Aorta (tissue), 5 donors: ENCODE measurements at regions of chr20 and their contacts with region 1.

Region 1: GRCh38 chr20:58650776-58651558 is at the start of gene STX16:
- DNase-seq: peak; percentile 95 to 96
- ATAC-seq: peak; percentile 96
- H3K4me3 ChIP-seq: peak within 1 kb of the TSS; percentile 78 to 81
- H3K27ac ChIP-seq: peak within 1 kb of the TSS; percentile 70 to 89
- H3K4me1 ChIP-seq: peaks cover 4 to 7% of the 10 kb centered on the region in 2 donors
- H3K27me3 ChIP-seq: no peaks in the 10 kb centered on the region
- total RNA-seq, gene STX16: 48.7 to 75.7 TPM

Region 2: GRCh38 chr20:57205360-57206245 is 1445.4 kb before region 1 on chr20:
- intact Hi-C with region 1: no loop called
- DNase-seq: no peak
- ATAC-seq: no peak
- H3K4me3 ChIP-seq: no peak overlapping the region
- H3K27ac ChIP-seq: no peak overlapping the region
- H3K4me1 ChIP-seq: no peaks in the 10 kb centered on the region
- H3K27me3 ChIP-seq: no peaks in the 10 kb centered on the region

Region 3: DNA sequence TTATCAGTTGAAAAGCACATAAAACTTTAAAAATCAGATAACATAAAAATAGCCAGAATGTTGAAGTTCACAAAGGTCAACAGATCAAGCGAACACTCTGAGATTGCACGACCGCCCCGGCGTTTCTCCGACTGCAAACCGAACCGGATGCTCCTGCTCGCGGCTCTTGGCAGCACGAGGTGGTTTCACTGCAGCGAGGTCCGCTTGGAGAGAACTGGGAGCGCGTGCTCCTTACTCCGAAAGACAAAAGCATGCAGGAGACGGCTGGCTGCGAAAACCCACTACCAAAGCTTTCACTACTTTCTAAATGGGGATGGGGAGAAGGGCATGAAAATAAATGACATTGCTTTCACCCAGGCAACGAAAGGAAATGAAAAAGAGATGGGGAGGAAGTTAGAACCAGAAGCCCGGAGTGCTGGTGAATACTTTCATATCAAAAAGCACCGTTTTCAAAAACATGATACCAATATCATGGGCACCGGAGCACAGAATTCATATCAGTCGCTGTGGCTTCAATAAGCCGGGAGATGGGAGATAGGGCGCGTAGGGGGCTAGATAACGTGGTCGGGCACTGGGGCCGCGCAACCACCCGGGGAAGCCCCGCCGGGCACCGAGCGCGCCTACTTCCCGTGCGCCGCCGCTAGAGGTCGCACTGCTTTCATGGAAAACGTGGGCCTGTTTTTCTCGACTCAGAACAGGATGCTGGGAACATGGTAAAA is 414.2 kb before region 1 on chr20:
- intact Hi-C with region 1: loop called in 1 of 2 experiments (anchors 5 kb)
- DNase-seq: peak; percentile 82 to 93
- ATAC-seq: peak; percentile 94
- H3K4me3 ChIP-seq: peak overlapping the region; percentile 64 to 68
- H3K27ac ChIP-seq: no peak overlapping the region
- H3K4me1 ChIP-seq: no peaks in the 10 kb centered on the region
- H3K27me3 ChIP-seq: no peaks in the 10 kb centered on the region

Region 4: GRCh38 chr20:58388882-58389323 is 262.1 kb before region 1 on chr20 and contains the start of gene VAPB:
- intact Hi-C with region 1: loop called in 1 of 2 experiments (anchors 10 kb)
- DNase-seq: peak; percentile 96 to 99
- ATAC-seq: peak; percentile 100
- H3K4me3 ChIP-seq: peak within 1 kb of the TSS; percentile 78 to 88
- H3K27ac ChIP-seq: peak within 1 kb of the TSS; percentile 6 to 82
- H3K4me1 ChIP-seq: peaks cover 0 to under 1% of the 10 kb centered on the region in 2 donors
- H3K27me3 ChIP-seq: no peaks in the 10 kb centered on the region
- total RNA-seq, gene VAPB: 47.6 to 50.6 TPM

Region 5: DNA sequence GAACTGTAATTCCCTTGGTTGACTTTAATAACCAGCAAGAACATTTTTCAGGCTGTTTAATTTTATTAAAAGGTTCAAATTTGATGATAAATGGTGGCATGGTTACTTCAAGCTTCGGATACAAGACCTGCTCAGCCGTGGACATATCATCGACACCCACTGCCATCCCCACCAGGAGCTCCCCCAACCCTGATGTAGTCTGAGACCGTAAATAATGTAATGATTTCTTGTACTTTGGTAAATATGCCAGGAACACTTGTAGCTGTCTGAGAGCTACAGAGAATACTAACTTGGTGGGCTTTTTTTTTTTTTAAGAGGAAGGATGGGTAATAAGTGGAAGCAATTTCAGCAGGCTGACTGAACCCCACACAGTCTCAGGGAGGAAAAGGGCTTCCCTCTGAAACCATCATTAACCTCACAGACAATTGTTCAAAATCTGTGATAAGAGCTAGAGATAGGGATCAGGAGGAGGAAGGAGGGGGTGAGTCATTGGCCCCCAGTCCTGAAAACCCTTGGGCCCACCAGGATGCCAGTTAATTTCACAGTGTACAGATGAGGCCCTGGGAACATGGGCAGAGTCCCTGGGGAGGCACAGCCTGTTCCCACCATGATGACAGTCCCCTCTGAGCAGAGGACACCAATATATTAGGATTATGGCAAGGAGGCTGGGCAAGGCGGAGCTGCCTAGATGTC is 191.8 kb before region 1 on chr20:
- intact Hi-C with region 1: no loop called
- DNase-seq: no peak
- ATAC-seq: no peak
- H3K4me3 ChIP-seq: no peak overlapping the region
- H3K27ac ChIP-seq: no peak overlapping the region
- H3K4me1 ChIP-seq: no peaks in the 10 kb centered on the region
- H3K27me3 ChIP-seq: no peaks in the 10 kb centered on the region

Region 6: DNA sequence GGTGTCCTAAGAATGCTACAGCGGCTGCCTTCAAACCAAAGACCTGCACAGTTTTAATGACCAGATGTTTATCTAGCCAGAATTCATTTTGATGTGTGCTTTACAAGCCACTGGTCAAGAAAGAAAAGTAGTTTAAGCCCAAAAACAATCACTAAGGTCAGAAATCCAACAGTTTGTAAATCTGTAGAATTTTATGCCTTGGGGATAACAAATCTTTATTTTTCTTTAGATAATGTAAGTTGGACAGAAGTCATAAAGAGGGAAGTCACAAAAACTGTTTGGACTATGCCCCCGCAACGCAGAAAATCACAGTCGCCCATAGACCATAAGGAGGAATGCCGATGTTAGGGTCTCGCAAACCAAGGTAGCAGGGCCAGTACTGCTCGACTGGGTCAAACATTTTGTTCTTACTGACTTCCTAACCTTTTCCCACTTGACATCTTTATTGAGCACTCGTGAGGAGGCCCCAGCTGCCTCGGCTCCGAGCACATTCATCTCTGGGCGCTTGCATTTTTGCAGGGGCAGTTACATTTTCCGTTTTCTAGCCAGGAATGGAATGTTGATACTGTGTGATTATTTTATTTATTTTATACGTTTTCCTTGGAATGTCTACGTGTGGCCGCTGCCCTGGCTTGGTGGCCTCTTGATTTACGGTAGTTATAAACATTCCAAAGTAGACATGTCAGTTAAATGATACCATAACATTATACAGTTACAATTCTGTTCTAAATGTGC is 79.1 kb before region 1 on chr20:
- intact Hi-C with region 1: loop called in 1 of 2 experiments (anchors 2 kb)
- DNase-seq: peak in 1 of 2 donors; percentile 63
- ATAC-seq: no peak
- H3K4me3 ChIP-seq: no peak overlapping the region
- H3K27ac ChIP-seq: peak overlapping the region; percentile 40 to 72
- H3K4me1 ChIP-seq: no peaks in the 10 kb centered on the region
- H3K27me3 ChIP-seq: no peaks in the 10 kb centered on the region

Region 7: DNA sequence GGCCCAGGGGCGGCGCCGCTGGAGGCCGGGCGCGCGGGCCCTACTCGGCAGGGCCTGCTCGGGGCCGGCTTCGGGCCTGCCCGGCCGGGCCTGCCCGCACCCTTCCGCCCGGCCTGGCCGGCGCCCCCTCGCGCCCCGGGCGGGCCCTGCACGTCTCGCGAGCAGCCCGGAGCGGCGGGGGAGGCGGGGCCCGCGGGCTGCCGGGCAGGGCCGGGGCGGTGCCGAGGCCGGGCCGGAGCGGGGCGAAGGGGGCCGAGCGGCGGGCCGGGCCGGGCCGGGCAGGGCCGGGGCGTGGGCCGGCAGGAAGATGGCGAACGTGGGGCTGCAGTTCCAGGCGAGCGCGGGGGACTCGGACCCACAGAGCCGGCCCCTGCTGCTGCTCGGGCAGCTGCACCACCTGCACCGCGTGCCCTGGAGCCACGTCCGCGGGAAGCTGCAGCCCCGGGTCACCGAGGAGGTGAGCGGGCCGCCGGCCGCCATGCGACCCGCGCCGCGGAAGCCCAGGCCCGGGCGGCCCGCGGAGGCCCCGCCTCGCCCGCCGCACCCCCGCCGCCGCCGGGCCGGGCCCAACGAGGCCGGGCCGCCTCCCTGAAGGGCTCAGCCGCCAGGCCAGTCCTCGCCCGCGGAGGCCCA is 41.7 kb after region 1 on chr20 and contains the start of gene NPEPL1:
- intact Hi-C with region 1: loop called (anchors 5 kb)
- DNase-seq: peak; percentile 81 to 90
- ATAC-seq: peak; percentile 83
- H3K4me3 ChIP-seq: peak within 1 kb of the TSS; percentile 32 to 35
- H3K27ac ChIP-seq: peak within 1 kb of the TSS; percentile 30 to 32
- H3K4me1 ChIP-seq: no peaks in the 10 kb centered on the region
- H3K27me3 ChIP-seq: no peaks in the 10 kb centered on the region
- total RNA-seq, gene NPEPL1: 22.1 to 53.1 TPM

Region 8: DNA sequence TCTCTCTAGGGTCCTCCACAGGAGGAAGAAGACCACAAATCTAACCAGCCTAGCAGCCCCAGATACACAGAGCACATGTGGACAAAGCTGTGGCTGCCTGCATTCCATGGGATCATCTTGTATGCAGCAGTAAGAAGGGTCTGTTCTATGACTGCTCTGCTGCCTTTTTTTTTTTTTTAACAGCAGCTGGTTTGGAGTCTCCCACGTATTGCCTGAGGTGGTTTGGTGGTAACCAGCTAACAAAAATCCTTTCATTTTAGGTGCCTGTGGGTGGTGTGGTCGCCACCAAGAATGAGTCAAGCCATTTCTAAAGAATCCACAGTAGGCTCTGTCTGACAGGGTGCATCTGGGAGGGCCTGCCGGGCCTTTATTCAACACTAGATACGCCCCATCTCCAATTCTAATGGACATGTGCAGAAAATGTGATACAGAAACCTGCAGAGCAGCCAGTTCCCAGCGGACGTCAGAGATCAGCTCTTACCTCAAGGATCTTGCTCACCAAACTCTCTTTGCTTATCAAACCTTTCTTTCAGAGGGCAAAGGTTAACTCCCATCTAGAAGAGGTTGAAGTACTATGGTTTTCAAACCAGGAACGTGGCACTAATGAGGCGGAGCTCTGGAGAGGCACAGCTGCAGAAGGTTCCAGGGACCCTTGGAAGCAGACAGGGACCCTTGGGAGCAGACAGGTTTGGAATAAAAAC is 167.8 kb after region 1 on chr20:
- intact Hi-C with region 1: no loop called
- DNase-seq: peak in 1 of 2 donors; percentile 4
- ATAC-seq: no peak
- H3K4me3 ChIP-seq: no peak overlapping the region
- H3K27ac ChIP-seq: no peak overlapping the region
- H3K4me1 ChIP-seq: no peaks in the 10 kb centered on the region
- H3K27me3 ChIP-seq: no peaks in the 10 kb centered on the region

Region 9: DNA sequence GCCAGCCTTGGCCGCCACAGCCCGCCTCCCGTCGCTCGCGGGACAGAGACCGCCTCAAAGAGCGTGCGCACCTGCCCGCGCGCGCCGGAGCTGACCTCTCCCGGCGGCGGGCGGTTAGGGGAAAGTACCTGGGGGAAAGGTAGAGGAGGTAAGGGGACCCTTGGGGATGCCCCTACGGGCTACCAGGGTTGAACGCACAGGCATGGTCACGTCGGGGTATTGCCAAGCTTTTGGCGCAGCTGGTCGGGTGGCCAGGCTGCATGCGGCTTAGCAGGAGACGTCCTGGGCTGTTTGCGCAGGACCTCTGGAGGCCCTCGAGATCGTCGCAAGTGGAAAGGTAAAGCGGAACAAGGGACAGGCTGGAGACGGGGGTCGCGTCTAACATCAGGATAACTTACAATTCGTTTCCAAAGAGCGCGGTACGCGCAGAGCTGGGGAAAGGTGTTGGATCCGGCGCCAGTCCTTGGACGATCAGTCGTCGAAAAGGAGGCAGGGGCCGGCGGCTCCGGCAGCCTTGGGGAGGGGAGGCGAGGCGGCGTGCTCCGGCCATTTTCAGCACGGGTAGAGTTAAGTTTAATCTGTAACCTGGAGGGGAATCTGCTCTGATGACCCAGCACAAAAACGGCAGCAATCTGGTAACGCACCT is 190.7 kb after region 1 on chr20:
- intact Hi-C with region 1: no loop called
- DNase-seq: no peak
- ATAC-seq: no peak
- H3K4me3 ChIP-seq: no peak overlapping the region
- H3K27ac ChIP-seq: no peak overlapping the region
- H3K4me1 ChIP-seq: no peaks in the 10 kb centered on the region
- H3K27me3 ChIP-seq: no peaks in the 10 kb centered on the region